Endothelial cell of umbilical vein (primary cell): ENCODE measurements at regions of chr1 and their contacts with region 1.

Region 1: DNA sequence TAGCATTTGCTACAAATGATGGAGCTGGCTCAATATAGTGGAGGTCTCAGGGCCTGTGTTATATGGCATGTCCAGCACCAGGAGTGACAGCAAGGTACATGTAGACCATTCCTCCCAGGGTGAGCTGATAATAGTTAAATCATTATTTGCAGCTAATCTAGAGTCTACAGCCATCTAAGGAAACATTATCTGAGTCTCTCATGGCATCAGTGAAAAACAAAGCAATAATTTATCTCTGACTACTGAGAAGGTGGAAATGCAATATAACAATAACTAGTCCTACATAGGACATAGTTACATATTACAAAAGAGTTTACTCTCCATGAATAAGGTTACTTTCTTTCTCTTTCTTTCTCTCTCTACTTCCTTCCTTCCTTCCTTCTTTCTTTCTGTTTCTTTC is 143.4 kb upstream of the KCNK2 start:
- DNase-seq: no peak
- H3K4me3 ChIP-seq: no peak overlapping the region
- H3K27ac ChIP-seq: no peak overlapping the region
- H3K4me1 ChIP-seq: peaks cover 6% of the 10 kb centered on the region
- H3K27me3 ChIP-seq: no peaks in the 10 kb centered on the region
- CTCF ChIP-seq: no peak
- POLR2A ChIP-seq: no peak

Region 2: GRCh38 chr1:214882616-214883015 is 56.6 kb before region 1 on chr1:
- CTCF ChIA-PET with region 1: no interaction called
- POLR2A ChIA-PET with region 1: no interaction called
- dilution Hi-C with region 1: no loop called
- intact Hi-C with region 1: no loop called
- DNase-seq: no peak
- H3K4me3 ChIP-seq: no peak overlapping the region
- H3K27ac ChIP-seq: no peak overlapping the region
- H3K4me1 ChIP-seq: no peaks in the 10 kb centered on the region
- H3K27me3 ChIP-seq: no peaks in the 10 kb centered on the region
- CTCF ChIP-seq: no peak
- POLR2A ChIP-seq: no peak

Region 3: GRCh38 chr1:214901718-214902117 is 37.5 kb before region 1 on chr1:
- CTCF ChIA-PET with region 1: no interaction called
- POLR2A ChIA-PET with region 1: no interaction called
- dilution Hi-C with region 1: no loop called
- intact Hi-C with region 1: no loop called
- DNase-seq: peak; percentile 70
- H3K4me3 ChIP-seq: no peak overlapping the region
- H3K27ac ChIP-seq: peak overlapping the region; percentile 61
- H3K4me1 ChIP-seq: peaks cover 28% of the 10 kb centered on the region
- H3K27me3 ChIP-seq: no peaks in the 10 kb centered on the region
- CTCF ChIP-seq: no peak
- POLR2A ChIP-seq: no peak

Region 4: GRCh38 chr1:214990619-214991018 is 51.4 kb after region 1 on chr1:
- CTCF ChIA-PET with region 1: no interaction called
- POLR2A ChIA-PET with region 1: no interaction called
- dilution Hi-C with region 1: no loop called
- intact Hi-C with region 1: loop called (anchors 5 kb)
- DNase-seq: peak; percentile 24
- H3K4me3 ChIP-seq: no peak overlapping the region
- H3K27ac ChIP-seq: no peak overlapping the region
- H3K4me1 ChIP-seq: no peaks in the 10 kb centered on the region
- H3K27me3 ChIP-seq: no peaks in the 10 kb centered on the region
- CTCF ChIP-seq: no peak
- POLR2A ChIP-seq: no peak

Region 5: GRCh38 chr1:215453440-215453839 is 514.3 kb after region 1 on chr1:
- CTCF ChIA-PET with region 1: no interaction called
- POLR2A ChIA-PET with region 1: no interaction called
- dilution Hi-C with region 1: no loop called
- intact Hi-C with region 1: no loop called
- DNase-seq: no peak
- H3K4me3 ChIP-seq: no peak overlapping the region
- H3K27ac ChIP-seq: no peak overlapping the region
- H3K4me1 ChIP-seq: no peaks in the 10 kb centered on the region
- H3K27me3 ChIP-seq: no peaks in the 10 kb centered on the region
- CTCF ChIP-seq: no peak
- POLR2A ChIP-seq: no peak